ENCODE measurements at regions of chr15 and their contacts with region 1.

Region 1: DNA sequence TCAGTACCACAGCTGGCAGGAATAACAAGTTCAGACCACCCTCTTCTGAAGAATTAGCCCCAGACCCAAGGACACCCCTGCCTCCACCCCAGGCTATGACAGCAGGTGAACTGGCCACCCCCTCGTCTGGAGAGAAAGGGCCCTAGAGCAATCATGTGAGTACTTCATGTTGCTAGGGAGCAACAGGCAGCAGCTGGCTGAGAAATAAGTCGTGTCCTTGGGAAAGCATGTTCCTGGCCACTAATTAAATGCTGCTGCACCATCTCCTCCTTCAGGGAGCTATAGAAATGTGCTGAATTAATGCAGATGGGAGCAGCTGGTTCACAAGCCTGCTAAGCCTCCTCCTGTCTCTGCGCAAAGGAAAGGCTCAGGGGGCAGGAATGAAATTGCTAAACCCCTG is 31.5 kb downstream of the MRPS11 start:
- DNase-seq: no peak
- ATAC-seq: peak; percentile 68

Region 2: DNA sequence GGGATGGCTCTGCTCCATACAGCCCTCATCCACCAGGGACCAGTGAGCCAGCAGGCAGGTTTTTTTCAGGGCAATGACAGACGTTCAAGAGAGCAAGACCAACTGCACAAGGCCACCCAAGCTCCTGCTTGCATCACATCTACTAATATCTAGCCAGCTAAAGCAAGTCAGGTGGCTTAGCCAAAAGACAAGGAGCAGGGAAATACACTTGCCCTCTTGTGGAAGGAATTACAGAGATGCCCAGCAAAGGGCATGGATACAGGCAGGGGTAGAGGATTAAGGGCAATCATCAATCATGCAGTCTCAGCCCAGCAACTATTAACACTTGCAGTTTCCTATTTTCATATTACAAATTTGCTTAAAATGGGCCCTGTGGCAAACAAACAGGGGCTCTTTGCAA is 161.0 kb before region 1 on chr15:
- intact Hi-C with region 1: no loop called
- DNase-seq: no peak
- ATAC-seq: no peak

Region 3: GRCh38 chr15:88535100-88535499 is 36.1 kb after region 1 on chr15:
- intact Hi-C with region 1: no loop called
- DNase-seq: no peak
- ATAC-seq: no peak

Region 4: GRCh38 chr15:88546248-88547129 is 47.5 kb after region 1 on chr15 and contains the start of gene DET1:
- intact Hi-C with region 1: loop called (anchors 1 kb)
- DNase-seq: peak; percentile 97
- ATAC-seq: peak; percentile 99
- total RNA-seq, gene DET1: 6.5 TPM

Measured in Right ventricle myocardium inferior (tissue), 1 donor.